ENCODE measurements at regions of chr1 and their contacts with region 1.

Region 1: DNA sequence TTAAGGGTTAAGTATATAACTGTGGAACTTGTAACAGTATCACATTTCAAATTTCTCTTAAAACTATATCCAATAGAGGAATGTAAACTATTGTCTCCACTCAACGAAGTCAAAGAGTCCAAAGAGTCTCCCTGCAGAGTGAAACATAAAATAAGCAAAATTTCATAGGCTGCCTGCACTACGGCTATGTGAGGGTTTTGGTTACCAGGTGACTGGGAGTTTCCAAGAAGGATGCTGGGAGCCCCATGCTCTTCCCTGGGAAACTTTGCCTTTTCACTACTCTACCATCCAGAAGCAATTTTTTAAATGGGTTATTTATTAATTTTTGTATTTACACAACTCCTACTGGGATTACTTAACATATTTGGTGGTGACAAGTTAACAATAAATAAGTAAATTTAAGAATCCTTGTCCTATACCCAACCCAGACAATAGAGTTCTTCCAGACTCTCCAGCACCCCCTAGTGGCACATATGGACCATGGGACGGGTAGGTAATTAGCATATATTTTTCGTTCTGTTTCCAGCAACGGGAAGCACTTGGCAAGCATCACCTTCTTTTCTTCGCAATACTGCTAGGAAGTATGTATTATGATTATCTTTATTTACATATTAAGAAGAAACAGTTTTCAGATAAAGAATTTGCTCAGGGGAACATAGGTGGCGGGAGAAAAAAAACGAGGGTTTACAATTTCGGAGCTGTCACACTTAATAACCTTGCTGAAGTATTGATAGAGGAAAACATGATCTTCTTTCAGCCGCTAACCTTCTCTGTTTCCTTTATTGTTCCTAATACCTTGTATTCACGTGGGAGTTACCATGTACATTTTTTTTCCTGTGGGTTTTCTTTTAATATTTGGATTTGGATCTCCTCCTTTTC is 3.5 kb downstream of the FMO2 start:
- DNase-seq: peak; percentile 65
- ATAC-seq: peak; percentile 63 to 77

Region 2: GRCh38 chr1:171081314-171081753 is 107.3 kb before region 1 on chr1:
- intact Hi-C with region 1: loop called in 1 of 2 experiments (anchors 2 kb)
- DNase-seq: no peak
- ATAC-seq: peak; percentile 64 to 73

Region 3: GRCh38 chr1:171110621-171111326 is 77.9 kb before region 1 on chr1:
- intact Hi-C with region 1: loop called in 1 of 2 experiments (anchors 5 kb)
- DNase-seq: no peak
- ATAC-seq: peak in 1 of 2 donors; percentile 61

Region 4: GRCh38 chr1:171141688-171142415 is 46.8 kb before region 1 on chr1:
- intact Hi-C with region 1: loop called in 1 of 2 experiments (anchors 5 kb)
- DNase-seq: peak; percentile 52
- ATAC-seq: peak; percentile 87 to 92

Region 5: GRCh38 chr1:171422511-171422910 is 233.9 kb after region 1 on chr1:
- intact Hi-C with region 1: no loop called
- DNase-seq: no peak
- ATAC-seq: no peak

Region 6: DNA sequence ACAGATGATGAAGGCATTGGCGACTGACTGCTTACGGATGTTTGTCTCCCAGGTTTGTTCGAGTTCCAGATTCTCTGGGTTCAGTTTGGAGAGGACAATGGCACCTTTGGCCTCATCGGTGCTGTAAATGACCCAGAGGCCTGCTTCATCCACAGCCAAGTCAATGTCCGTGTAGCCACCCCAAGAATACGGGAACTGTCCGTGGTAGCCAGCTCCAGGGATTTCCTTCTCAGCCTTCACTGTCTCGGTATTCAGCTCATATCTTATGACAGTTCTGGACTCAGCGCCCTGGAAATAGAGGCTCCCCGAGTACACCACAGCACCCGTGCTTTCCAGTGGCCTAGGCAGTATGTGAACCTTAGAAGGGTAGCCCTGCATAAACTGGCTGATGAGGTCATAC is 447.5 kb after region 1 on chr1:
- intact Hi-C with region 1: no loop called
- DNase-seq: no peak
- ATAC-seq: no peak

Measured in left cardiac atrium (tissue), 4 donors.